HEK293T (cell line): ENCODE measurements at regions of chr10 and their contacts with region 1.

Region 1: DNA sequence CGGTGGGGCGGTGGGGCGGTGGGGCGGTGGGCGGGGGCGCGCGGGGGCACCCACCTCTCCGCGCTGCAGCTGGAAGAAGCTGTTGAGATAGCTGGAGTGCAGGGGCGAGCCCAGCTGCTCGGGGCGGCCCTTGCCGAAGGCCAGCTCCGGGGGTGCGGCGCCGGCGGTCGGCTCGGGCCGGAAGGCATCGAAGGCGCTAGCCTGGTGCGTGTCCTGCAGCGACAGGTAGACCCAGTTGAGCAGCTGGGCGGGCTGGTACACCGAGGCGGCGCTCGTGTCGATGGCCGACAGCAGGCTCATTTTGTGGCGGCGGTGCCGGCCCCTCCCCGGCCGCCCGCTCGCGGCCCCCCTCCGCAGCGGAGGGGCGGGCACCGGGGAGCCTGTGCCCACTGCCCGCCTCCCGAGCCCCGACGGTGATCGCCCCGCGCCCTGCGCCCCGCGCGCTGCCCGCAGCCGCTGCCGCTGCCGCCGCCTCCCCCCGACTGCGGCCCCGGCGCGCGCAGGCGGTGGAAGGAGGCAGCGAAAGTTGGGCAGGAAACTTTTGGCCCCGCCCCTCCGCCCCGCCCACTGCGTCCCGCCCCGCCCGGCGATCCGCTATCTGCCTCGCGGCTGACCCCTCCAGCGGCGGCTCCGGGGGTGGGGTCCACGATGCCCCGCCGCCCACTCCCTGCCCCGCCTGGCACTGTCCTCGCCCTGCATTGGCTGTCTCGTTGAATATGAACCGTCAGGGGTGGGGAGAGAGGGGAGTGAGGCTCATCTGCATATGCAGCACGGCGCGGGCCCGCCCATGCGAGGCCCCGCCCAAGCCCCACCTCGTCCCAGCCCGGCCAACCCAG is at the start of gene ZCCHC24:
- DNase-seq: peak; percentile 95

Region 2: DNA sequence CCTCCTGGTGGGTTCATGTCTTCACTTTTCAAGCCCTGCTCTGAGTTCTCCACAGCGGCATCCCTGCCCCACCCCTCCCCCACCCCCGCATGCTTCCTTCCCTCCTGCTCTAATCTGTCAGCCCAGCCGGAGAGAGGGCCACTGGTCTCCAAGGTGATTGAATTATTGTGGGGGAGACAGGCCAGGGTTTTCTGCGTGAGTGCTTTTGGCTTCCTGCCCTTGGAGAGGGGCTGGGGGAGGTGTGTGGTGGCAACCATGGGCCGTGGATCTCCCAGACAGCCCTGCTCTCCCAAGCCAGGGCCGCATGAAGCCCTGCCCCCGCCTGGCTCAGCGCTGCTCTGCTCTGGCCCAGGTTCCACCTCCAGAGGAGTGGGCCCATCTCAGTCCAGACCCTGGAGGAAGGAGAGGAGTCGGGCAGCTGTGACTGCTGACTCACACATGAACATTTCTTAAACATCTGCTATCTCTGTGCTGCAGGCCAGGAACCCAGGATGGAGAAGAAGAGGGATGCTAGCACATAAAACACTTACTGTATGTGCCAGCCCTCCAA is 266.7 kb before region 1 on chr10:
- CTCF ChIA-PET with region 1: no interaction called
- POLR2A ChIA-PET with region 1: no interaction called
- DNase-seq: no peak

Region 3: GRCh38 chr10:79422178-79422892 is 23.0 kb before region 1 on chr10:
- CTCF ChIA-PET with region 1: no interaction called
- POLR2A ChIA-PET with region 1: no interaction called
- DNase-seq: no peak

Region 4: GRCh38 chr10:79434821-79435251 is 10.5 kb before region 1 on chr10:
- CTCF ChIA-PET with region 1: no interaction called
- POLR2A ChIA-PET with region 1: interaction called, 11 read pairs
- DNase-seq: no peak